Gastrocnemius medialis (tissue), 4 donors: ENCODE measurements at regions of chr16 and their contacts with region 1.

Region 1: GRCh38 chr16:85327731-85328675 is 215.7 kb upstream of the CIBAR2 start:
- DNase-seq: no peak
- ATAC-seq: no peak
- H3K4me3 ChIP-seq: no peak overlapping the region
- H3K27ac ChIP-seq: no peak overlapping the region
- H3K4me1 ChIP-seq: peaks cover 15 to 18% of the 10 kb centered on the region in 2 donors
- H3K27me3 ChIP-seq: no peaks in the 10 kb centered on the region
- CTCF ChIP-seq: no peak
- POLR2A ChIP-seq: no peak

Region 2: GRCh38 chr16:84312783-84313382 is 1015.1 kb before region 1 on chr16:
- in situ Hi-C with region 1: no loop called
- intact Hi-C with region 1: no loop called
- DNase-seq: no peak
- ATAC-seq: no peak
- H3K4me3 ChIP-seq: no peak overlapping the region
- H3K27ac ChIP-seq: no peak overlapping the region
- H3K4me1 ChIP-seq: no peaks in the 10 kb centered on the region
- H3K27me3 ChIP-seq: peaks cover 6 to 21% (median 10%) of the 10 kb centered on the region in 3 donors
- CTCF ChIP-seq: no peak
- POLR2A ChIP-seq: no peak

Region 3: DNA sequence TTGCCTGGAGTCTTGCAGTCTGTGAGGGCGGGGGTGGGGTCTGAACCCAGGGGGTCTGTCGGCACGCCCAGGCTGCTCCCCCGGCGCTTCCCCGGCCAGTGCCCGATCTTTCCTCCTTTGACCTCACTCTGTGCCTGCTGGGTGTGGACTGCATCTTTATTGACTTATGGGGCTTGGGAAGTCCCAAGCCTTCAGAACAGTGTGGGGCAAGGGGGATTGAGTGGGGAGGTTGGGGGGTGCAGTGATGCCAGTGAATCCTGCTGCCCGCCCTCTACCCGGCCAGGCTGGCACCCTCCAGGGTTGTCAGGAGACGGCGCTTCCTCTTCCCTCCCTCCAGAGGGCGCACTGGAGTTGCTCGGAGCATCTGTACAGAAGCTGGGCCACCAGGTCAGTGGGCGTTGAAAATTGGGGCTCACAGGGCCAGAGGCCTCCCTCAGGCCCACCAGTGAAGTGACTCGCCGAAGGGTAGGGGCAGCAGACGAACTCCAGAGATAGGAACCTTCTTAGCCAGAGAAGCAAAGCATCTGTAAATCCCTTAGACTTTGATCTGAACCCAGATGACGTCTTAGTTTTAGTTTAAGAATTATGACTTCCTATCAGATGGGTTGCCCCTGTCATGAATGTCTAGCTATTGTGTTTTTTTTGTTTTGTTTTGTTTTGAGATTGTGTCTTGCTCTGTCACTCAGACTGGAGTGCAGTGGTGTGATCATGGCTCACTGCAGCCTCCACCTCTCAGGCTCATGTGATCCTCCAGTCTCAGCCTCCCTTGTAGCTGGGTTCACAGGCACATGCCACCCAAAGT is 30.9 kb before region 1 on chr16:
- in situ Hi-C with region 1: no loop called
- intact Hi-C with region 1: loop called (anchors 2 kb)
- DNase-seq: peak in 1 of 2 donors; percentile 38
- ATAC-seq: peak in 1 of 2 donors; percentile 38
- H3K4me3 ChIP-seq: no peak overlapping the region
- H3K27ac ChIP-seq: no peak overlapping the region
- H3K4me1 ChIP-seq: peaks cover 18 to 28% of the 10 kb centered on the region in 2 donors
- H3K27me3 ChIP-seq: no peaks in the 10 kb centered on the region
- CTCF ChIP-seq: peak; percentile 32 to 84 (median 73)
- POLR2A ChIP-seq: no peak